ENCODE measurements at regions of chr14 and their contacts with region 1.

Region 1: GRCh38 chr14:75234173-75235115 is 44.2 kb upstream of the FOS start:
- DNase-seq: peak; percentile 48 to 85
- H3K4me3 ChIP-seq: no peak overlapping the region
- H3K27ac ChIP-seq: peak overlapping the region; percentile 74 to 81
- H3K4me1 ChIP-seq: peaks cover 11 to 27% of the 10 kb centered on the region in 2 donors
- H3K27me3 ChIP-seq: no peaks in the 10 kb centered on the region
- CTCF ChIP-seq: no peak

Region 2: DNA sequence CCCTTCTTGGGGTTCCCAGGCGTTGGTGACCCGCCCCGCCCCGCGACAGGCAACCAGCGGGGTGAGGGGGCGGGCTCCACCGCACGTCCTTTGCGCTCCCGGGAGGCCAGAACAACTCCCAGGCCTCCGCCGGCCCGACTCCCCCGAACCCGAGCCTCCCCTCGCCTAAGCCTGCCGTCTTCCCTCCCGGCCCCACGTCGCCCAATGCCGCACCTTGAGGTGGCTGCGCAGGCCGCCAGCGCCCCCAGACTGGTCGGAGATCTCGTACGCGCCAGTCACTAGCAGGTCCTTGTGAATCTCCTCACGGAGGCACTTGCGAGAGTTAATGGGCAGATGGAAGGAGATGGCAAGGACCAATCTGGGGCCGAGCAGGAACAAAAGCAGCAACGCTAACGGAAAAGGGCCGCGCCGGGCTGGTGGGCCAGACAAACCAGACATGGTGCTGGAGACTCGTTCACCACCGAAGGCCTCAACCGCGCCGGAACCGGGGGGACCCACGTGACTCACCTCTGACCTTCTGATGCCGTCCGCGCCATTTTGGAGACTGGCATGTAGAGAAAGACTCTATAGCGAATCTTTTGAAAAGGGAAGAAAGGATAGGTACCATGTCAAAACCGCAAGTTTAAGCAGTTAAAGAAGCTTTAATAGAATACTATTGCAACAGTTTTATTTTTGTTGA is 58.2 kb before region 1 on chr14 and contains the start of gene TMED10:
- intact Hi-C with region 1: loop called (anchors 2 kb)
- DNase-seq: peak; percentile 55 to 92
- H3K4me3 ChIP-seq: peak within 1 kb of the TSS; percentile 92 to 97
- H3K27ac ChIP-seq: peak within 1 kb of the TSS; percentile 99 to 100
- H3K4me1 ChIP-seq: peaks cover 0 to 15% of the 10 kb centered on the region in 2 donors
- H3K27me3 ChIP-seq: no peaks in the 10 kb centered on the region
- CTCF ChIP-seq: peak in 1 of 3 experiments; percentile 10
- total RNA-seq, gene TMED10: 190 TPM

Region 3: DNA sequence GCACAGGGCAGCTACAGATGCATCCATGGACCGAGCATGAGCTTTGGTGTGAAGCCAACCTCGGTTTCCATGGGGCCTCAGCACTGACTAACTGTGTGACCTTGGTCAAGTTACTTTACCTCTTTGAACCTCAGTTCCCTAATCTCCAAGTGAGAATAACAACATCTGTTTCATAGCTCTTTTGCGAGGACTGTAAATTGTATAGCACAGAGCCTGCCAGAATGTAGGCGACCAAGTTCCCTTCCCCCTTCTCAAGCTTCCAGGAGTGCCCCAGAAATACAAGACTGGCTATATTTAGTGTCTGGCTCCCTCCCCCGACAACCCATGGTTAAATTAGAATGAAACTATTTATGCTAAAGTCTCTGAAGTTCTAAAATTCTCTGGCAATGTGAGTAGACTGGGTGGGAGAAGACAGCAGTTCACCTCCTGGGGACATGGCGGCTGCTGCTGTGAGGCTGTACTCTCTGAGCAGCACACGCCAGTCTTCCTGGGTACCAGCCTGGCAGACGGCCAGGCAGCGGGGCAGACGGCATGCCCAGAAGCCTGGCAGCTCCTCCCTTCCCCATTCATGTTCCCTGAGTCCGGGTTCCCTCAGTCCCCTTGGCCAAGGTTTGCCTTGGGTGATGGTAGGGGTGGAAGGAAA is 36.0 kb before region 1 on chr14:
- intact Hi-C with region 1: loop called (anchors 5 kb)
- DNase-seq: peak in 1 of 2 donors; percentile 68
- H3K4me3 ChIP-seq: peak overlapping the region in 1 of 2 donors; percentile 0
- H3K27ac ChIP-seq: peak overlapping the region; percentile 44 to 75
- H3K4me1 ChIP-seq: peaks cover 10 to 11% of the 10 kb centered on the region in 2 donors
- H3K27me3 ChIP-seq: no peaks in the 10 kb centered on the region
- CTCF ChIP-seq: no peak

Region 4: GRCh38 chr14:75278422-75279161 is 44.1 kb after region 1 on chr14 and contains the start of gene FOS:
- intact Hi-C with region 1: loop called (anchors 1 kb)
- DNase-seq: peak; percentile 83 to 97
- H3K4me3 ChIP-seq: peak within 1 kb of the TSS; percentile 88 to 89
- H3K27ac ChIP-seq: peak within 1 kb of the TSS; percentile 95 to 100
- H3K4me1 ChIP-seq: peaks cover 13 to 21% of the 10 kb centered on the region in 2 donors
- H3K27me3 ChIP-seq: no peaks in the 10 kb centered on the region
- CTCF ChIP-seq: peak in 1 of 3 experiments; percentile 38
- total RNA-seq, gene FOS: 4,268 TPM